T-cell (primary cell): ENCODE measurements at regions of chr9 and their contacts with region 1.

Region 1: GRCh38 chr9:78296893-78297671 is at the start of gene PSAT1:
- DNase-seq: peak; percentile 68 to 92 (median 84)
- ATAC-seq: peak; percentile 96 to 98 (median 98)
- H3K4me3 ChIP-seq: peak within 1 kb of the TSS; percentile 82 to 97
- H3K4me3 Mint-ChIP-seq: peak within 1 kb of the TSS; percentile 85 to 97 (median 91)
- H3K27ac ChIP-seq: peak within 1 kb of the TSS; percentile 38
- H3K27ac Mint-ChIP-seq: peak within 1 kb of the TSS; percentile 52 to 76
- H3K4me1 ChIP-seq: peaks cover 11 to 35% of the 10 kb centered on the region in 2 experiments
- H3K4me1 Mint-ChIP-seq: peaks cover 27 to 33% (median 30%) of the 10 kb centered on the region in 3 donors
- H3K27me3 ChIP-seq: peaks cover 0 to 16% of the 10 kb centered on the region in 2 experiments
- H3K27me3 Mint-ChIP-seq: peaks cover 0 to 1% of the 10 kb centered on the region in 2 donors
- total RNA-seq, gene PSAT1: 2.0 to 37.3 (median 24.9) TPM

Region 2: DNA sequence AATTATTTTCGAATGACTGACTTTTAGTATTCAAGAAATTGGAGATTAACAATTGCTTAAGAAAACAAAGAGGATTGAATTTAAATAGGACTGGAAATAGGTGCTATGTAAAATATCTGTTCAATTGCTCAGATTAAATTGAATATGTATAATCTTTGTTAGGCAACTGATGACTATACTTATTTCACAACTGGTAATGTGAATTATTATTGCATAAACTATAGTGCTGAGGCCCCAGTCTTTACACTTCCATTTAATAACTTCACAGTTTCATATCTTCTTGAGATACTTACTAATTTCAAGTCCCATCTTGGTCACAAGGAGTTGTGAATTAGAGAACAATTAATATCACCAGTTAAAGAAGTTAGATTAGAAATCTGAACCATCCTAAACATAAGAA is 44.5 kb before region 1 on chr9:
- CTCF ChIA-PET with region 1: interaction called in 1 of 2 experiments, 3 read pairs
- POLR2A ChIA-PET with region 1: interaction called in 1 of 2 experiments, 11 read pairs
- DNase-seq: no peak
- ATAC-seq: no peak
- H3K4me3 ChIP-seq: no peak overlapping the region
- H3K4me3 Mint-ChIP-seq: no peak overlapping the region
- H3K27ac ChIP-seq: no peak overlapping the region
- H3K27ac Mint-ChIP-seq: no peak overlapping the region
- H3K4me1 ChIP-seq: no peaks in the 10 kb centered on the region
- H3K4me1 Mint-ChIP-seq: no peaks in the 10 kb centered on the region
- H3K27me3 ChIP-seq: no peaks in the 10 kb centered on the region
- H3K27me3 Mint-ChIP-seq: no peaks in the 10 kb centered on the region

Region 3: DNA sequence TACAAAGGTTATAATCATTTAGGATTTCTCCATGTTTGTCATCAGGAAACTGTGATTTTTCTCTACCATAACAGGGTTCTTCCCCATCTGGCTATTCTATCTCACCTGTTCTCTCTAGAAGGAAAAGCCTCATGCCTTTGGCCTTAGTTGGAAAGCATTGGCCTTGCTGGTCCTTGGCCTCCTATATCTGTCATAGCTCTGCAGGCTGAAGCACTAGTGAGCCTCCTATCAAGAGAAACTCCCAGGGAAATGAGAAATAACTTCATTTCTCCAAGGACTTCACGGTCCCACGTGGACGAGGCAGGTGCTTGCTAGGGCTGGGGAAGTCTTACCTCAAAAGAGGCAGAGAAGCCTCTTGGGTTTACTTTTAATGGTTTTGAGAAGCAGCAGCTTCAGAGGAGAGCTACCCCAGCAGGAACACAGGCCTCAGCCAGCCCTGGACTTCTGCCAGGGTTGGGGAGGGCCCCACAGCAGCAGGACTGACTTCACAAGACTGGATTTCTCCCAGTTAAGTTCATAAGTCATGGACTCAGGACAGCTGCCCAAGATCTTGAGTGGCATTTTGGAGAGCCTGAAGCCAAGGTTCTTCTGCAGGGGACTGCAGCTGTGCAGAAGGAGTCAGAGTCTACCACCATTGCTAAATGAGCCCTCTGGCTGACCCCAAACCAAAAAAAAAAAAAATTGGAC is 16.0 kb before region 1 on chr9:
- CTCF ChIA-PET with region 1: no interaction called
- POLR2A ChIA-PET with region 1: interaction called in 1 of 2 experiments, 10 read pairs
- DNase-seq: no peak
- ATAC-seq: no peak
- H3K4me3 ChIP-seq: no peak overlapping the region
- H3K4me3 Mint-ChIP-seq: no peak overlapping the region
- H3K27ac ChIP-seq: no peak overlapping the region
- H3K27ac Mint-ChIP-seq: no peak overlapping the region
- H3K4me1 ChIP-seq: peaks cover 0 to 3% of the 10 kb centered on the region in 2 experiments
- H3K4me1 Mint-ChIP-seq: peaks cover 2 to 7% (median 5%) of the 10 kb centered on the region in 3 donors
- H3K27me3 ChIP-seq: no peaks in the 10 kb centered on the region
- H3K27me3 Mint-ChIP-seq: no peaks in the 10 kb centered on the region

Region 4: DNA sequence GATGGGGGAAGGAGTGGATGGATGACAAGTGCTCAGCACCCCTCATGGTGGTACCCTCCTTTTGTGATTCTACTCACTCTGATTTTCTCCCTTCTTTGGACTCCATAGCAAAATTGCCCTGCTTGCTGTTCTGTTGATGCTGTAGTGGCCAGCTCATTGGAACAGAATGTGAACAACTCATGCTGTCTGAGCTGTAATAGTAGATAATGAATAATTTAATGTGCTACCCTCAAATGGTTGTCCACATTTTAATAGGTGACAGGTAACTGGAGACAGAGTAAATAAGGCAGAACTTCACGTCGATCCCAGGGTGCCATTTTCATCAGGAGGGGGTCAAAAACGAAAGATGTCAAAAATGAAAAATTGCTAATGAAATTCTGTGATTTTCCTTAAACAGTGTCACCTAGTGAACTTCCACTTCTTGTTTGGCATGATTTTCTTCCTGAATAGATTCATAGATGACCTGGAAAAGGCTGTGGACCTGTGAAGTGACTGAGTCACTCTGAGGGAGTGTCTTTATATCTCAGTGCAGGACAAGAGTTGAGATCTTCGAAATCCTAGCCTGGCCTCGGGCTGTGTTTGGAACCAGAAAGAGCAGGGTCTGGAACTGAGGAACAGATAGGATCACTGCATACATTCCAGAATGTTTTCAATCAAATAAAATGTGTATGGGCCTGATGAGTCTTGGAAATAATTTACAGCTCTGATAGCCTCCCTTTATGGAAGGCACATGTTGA is 270.0 kb after region 1 on chr9:
- CTCF ChIA-PET with region 1: no interaction called
- POLR2A ChIA-PET with region 1: no interaction called
- DNase-seq: no peak
- ATAC-seq: no peak
- H3K4me3 ChIP-seq: no peak overlapping the region
- H3K4me3 Mint-ChIP-seq: no peak overlapping the region
- H3K27ac ChIP-seq: no peak overlapping the region
- H3K27ac Mint-ChIP-seq: no peak overlapping the region
- H3K4me1 ChIP-seq: no peaks in the 10 kb centered on the region
- H3K4me1 Mint-ChIP-seq: no peaks in the 10 kb centered on the region
- H3K27me3 ChIP-seq: no peaks in the 10 kb centered on the region
- H3K27me3 Mint-ChIP-seq: peaks cover 0 to 3% of the 10 kb centered on the region in 2 donors